Dorsolateral prefrontal cortex (tissue), 120 donors: ENCODE measurements at regions of chr4 and their contacts with region 1.

Region 1: DNA sequence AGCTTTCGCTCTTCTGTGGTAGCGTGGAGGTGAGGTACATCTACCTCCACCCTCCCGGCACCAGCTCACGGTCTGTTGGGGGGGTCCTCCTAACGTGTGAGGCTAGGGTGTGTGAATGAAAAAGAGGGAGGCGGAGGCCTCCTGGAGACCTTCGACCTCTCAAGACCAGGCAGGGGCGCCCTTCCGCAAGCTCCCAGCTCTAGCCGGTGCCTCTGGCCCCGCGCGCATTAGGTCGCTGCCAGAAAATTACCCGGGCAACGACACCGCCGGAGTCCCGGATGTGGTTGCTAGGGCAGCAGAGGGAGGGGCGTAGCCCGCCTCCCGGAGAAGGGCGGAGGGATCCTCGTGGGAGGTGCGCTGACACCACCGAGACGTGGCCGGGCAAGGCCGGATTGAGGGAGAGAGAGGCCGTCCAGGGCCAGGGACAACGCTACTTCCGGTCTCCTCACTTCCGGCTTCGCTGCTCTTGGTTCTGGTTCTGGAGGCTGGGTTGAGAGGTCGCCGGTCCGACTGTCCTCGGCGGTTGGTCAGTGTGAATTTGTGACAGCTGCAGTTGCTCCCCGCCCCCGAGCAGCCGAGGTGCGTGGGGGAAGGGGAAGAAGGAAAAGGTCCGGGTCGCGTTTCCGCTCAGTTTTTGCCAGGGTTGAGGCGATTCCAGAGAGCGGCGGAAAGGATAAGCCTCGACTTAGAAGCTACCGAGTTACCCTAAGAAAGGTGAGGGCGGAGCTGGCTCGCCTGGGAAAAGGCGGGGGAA is at the starts of genes ARFIP1 and TIGD4:
- DNase-seq: peak; percentile 97 to 100 (median 98)
- H3K4me3 ChIP-seq: peak within 1 kb of the TSS; percentile 62 to 100 (median 89)
- H3K27ac ChIP-seq: peak within 1 kb of the TSS; percentile 45 to 95 (median 87)
- H3K27me3 ChIP-seq: no peaks in the 10 kb centered on the region
- CTCF ChIP-seq: peak in 53 of 56 donors; percentile 22 to 78 (median 50)
- total RNA-seq, gene ARFIP1: 13.8 to 37.2 (median 23.3) TPM
- total RNA-seq, gene TIGD4: 0.74 to 3.5 (median 1.9) TPM

Region 2: DNA sequence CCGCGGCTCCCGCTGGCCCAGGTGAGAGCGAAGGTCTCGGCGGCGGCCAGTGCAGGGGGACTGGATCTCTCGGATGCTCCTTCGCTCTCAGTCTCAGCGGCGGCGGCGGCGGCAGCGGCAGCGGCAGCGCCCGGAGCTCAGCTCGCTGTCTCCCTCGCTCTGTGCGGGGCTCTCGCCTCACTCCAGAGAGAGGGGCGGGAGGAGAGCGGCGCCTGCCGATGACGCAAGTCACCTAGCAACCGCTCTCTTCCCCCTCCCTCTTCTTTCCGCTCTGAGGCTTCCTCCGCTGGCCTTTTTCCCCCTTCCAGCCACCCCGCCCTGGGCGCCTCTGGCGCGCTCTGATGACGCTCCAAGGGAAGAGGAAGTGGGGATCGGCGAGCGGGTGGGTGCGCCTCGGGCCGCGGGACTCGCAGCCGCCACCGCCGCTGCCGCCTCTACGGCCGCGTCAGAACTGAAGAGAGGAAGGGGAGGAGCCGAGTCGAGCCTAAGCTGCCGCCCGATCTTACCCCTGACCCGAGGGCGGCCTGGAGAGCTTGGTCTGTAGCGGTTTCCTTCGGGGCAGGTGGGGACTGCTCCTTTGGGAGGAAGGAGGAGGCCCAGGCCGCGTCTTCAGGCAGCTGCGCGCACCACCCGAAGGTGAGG is 243.7 kb before region 1 on chr4 and contains the start of gene FBXW7:
- intact Hi-C with region 1: loop called (anchors 5 to 10 kb)
- DNase-seq: peak; percentile 97 to 100 (median 98)
- H3K4me3 ChIP-seq: peak within 1 kb of the TSS; percentile 70 to 100 (median 98)
- H3K27ac ChIP-seq: peak within 1 kb of the TSS; percentile 52 to 96 (median 86)
- H3K27me3 ChIP-seq: no peaks in the 10 kb centered on the region
- CTCF ChIP-seq: peak in 23 of 56 donors; percentile 6 to 54 (median 23)
- total RNA-seq, gene FBXW7: 126 to 372 (median 279) TPM

Region 3: GRCh38 chr4:153159728-153160221 is 380.1 kb after region 1 on chr4:
- intact Hi-C with region 1: no loop called
- DNase-seq: no peak
- H3K4me3 ChIP-seq: no peak overlapping the region
- H3K27ac ChIP-seq: peak overlapping the region in 48 of 59 donors; percentile 21 to 99 (median 86)
- H3K27me3 ChIP-seq: no peaks in the 10 kb centered on the region
- CTCF ChIP-seq: no peak

Region 4: DNA sequence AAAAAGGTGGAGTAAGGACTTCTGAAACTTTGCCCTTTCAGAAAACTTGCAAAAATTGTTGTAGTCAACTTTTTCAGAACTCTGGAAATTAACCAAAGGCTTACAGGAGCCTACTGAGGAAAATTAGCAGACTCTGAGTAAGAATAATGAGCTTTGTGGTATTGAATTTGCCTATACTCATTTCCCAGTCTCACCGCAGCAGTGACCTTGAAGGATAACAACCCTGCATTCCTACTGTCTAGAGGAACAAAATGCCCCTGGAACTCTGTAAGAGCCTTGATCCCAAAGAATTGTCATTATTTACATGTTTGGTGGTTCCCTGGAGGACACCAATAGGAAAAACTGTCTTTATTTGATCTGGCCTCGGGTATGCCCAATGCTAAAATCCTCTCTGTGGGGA is 622.7 kb after region 1 on chr4:
- intact Hi-C with region 1: no loop called
- DNase-seq: no peak
- H3K4me3 ChIP-seq: no peak overlapping the region
- H3K27ac ChIP-seq: no peak overlapping the region
- H3K27me3 ChIP-seq: no peaks in the 10 kb centered on the region
- CTCF ChIP-seq: no peak